ENCODE measurements at regions of chr7 and their contacts with region 1.

Region 1: GRCh38 chr7:28955718-28956619 is 2.2 kb downstream of the TRIL start:
- DNase-seq: peak; percentile 84 to 90
- ATAC-seq: peak; percentile 83

Region 2: DNA sequence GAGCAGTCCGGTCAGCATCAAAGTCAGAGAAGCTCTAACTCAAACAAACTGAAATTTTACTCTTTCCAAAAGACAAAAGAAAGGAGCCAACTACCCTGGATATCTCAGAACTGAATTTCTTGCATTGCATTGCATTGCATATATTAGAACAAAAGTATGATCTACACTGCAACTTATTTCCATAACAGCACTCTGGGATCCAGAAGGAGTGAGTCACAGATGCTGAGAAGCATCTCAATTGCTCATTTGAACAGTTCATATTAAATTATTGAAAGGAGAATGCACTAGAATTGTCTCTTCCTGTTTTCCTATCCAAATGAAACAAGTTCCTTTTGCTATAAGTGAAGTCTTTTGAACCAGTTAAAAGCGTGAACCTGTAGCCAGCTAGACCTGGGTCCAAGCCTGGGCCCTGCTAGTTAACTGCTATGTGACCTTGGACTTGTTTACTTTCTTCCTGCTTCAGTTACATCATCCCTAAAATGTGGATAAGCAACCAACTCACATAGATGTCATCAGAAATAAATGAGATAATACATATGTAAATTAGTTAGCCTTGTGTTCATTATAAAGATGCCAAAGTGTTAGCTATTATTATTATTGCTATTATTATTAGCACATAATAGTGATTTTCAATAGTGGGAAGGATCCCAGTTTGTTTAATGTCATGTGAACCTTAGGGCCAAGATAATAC is 359.6 kb before region 1 on chr7:
- intact Hi-C with region 1: no loop called
- DNase-seq: no peak
- ATAC-seq: no peak

Region 3: GRCh38 chr7:28853834-28854749 is 101.9 kb before region 1 on chr7:
- intact Hi-C with region 1: no loop called
- DNase-seq: peak; percentile 54 to 85
- ATAC-seq: peak; percentile 99

Region 4: GRCh38 chr7:29105752-29106668 is 150.0 kb after region 1 on chr7:
- intact Hi-C with region 1: loop called in 1 of 2 experiments (anchors 10 kb)
- DNase-seq: peak in 1 of 2 donors; percentile 18
- ATAC-seq: peak; percentile 89